ENCODE measurements at regions of chr7 and their contacts with region 1.

Region 1: GRCh38 chr7:54758702-54759592 is at the start of gene SEC61G:
- DNase-seq: peak; percentile 96
- H3K4me3 Mint-ChIP-seq: peak within 1 kb of the TSS; percentile 96
- H3K27ac Mint-ChIP-seq: peak within 1 kb of the TSS; percentile 97
- H3K4me1 Mint-ChIP-seq: peaks cover 27% of the 10 kb centered on the region
- H3K27me3 Mint-ChIP-seq: peaks cover under 1% of the 10 kb centered on the region
- total RNA-seq, gene SEC61G: 55.4 to 106 TPM

Region 2: DNA sequence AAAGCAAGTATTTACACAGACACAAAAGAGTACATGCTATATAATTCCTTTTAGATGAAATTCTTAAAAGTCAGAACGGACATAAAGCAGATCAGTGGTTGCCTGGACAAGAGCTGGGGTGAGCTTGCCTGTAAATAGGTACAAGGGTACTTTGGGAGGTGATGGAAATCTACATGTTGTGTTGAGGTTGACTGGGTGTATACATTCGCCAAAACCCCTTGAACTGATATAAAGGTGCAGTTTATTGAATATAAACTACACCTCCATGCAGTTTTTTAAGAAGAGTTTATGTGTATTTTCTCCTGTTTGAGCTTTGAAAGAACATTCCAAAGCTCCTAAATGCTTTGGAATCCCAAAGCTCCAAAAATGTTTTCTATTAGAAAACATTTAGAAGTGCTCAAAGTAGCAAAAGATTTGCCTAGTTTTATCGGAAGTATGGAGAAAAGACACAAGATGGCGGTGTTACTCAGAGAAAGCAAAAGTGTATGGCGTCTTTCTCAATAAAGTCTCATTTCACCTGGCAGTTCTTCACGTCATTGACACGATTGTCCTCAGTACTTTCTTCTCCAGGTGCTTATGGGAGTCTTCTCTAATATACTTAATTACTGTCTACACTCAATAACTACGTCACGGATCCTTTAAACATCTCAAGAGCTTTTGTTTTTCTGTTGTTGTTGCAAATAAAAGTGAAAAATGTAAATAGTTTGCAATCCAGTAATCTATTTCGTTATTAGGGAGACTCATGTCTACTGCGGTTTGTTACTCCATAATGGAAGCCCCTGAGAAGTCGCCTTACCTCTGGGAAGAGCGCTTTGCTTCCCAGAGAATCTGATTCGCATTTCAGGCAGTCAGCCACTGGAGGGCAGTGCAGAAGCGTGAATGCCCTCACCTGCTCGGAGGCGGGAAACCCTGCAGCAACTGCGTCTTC is 14.8 kb after region 1 on chr7:
- CTCF ChIA-PET with region 1: interaction called, 12 read pairs
- POLR2A ChIA-PET with region 1: no interaction called
- DNase-seq: peak; percentile 74
- H3K4me3 Mint-ChIP-seq: peak overlapping the region; percentile 64
- H3K27ac Mint-ChIP-seq: peak overlapping the region; percentile 39
- H3K4me1 Mint-ChIP-seq: peaks cover 10% of the 10 kb centered on the region
- H3K27me3 Mint-ChIP-seq: peaks cover 29% of the 10 kb centered on the region

Measured in activated CD4-positive, alpha-beta T cell treated with anti-CD3 and anti-CD28 coated beads, Interleukin-2, amount 10 ng/mL, durations not matched to agents 7 days and 5 days (primary cell).